ENCODE measurements at regions of chr7 and their contacts with region 1.

Region 1: DNA sequence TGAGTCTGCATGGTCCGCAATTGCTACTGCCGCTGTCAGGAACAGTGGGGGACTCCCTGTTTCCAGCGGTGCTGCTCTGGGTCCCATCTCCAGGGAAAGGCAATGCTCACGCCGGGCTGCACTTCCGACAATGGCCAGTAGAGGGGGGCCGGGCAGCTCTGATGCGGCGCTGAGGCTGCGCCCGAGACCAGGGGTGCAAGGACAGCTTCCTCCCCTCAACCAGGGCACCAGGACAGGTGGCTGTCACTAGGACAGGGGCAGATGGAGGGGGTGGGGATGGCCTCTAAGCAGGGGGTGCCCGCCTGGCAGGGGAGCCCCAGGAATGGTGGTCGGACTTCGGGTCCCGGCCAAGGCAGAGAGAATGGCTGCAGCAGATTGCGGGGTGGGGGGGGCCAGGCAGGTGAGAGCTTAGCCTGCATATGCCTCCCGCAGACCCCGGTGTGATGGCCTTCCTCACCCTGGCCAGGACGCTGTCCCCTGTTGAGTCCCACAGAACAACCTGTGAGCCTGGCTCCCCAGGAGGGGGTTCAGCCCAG is 71.0 kb upstream of the KCTD7 start:
- DNase-seq: peak; percentile 96
- H3K4me3 ChIP-seq: peak overlapping the region in 1 of 2 experiments; percentile 35; a peak in 1 of 4 replicates
- H3K27ac ChIP-seq: no peak overlapping the region
- H3K4me1 ChIP-seq: peaks cover 0 to 9% of the 10 kb centered on the region in 2 experiments; a peak in 1 of 4 replicates
- H3K27me3 ChIP-seq: no peaks in the 10 kb centered on the region
- CTCF ChIP-seq: peak; percentile 98
- EP300 ChIP-seq: no peak
- RAD21 ChIP-seq: peak; percentile 93

Region 2: DNA sequence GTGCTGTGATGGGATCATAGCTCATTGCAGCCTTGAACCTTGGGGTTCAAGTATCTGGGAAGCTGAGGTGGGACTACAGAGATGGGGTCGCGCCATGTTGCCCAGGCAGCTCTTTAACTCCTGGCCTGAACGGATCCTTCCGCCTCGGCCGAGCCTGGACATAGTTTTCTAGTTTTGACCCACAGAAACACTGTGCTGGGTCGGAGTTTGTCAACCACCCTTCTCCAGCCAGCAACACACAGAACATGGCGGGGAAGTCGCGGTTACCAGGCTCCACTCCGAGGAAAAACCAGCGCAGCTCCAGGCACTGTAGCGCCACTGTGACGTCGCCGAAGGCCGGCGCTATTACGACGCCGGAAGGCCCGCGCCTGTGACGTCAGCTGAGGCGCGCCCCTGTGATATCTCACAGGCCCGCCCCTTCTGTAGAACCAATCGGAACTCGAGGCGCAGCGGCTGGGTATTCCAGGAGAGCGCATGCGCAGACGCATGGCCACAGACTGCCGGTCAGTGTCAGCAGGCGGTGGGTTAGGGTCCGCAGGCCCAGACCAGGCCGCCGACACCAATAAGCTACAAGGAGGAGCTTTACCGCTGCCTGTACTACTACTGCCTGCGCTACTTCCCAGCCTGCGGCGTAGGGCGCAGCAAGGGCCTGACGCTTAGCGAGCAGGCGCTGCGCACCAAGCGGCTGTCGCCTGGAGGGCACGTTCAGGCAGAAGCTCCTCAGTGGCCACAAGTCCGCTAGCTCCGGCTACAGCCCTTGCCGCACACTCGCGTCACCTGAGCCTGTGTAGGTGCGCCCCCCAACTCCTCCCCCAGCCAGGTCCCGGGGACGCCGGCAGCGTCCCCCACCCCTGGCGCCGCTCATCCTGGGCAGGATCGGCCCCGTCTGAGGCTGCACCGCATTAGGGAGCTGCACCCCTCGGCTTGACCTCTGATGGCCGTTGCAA is 64.2 kb before region 1 on chr7:
- CTCF ChIA-PET with region 1: no interaction called
- POLR2A ChIA-PET with region 1: no interaction called
- DNase-seq: peak; percentile 99
- H3K4me3 ChIP-seq: peak overlapping the region; percentile 62 to 74
- H3K27ac ChIP-seq: peak overlapping the region; percentile 84
- H3K4me1 ChIP-seq: peaks cover 0 to 8% of the 10 kb centered on the region in 2 experiments; a peak in 1 of 4 replicates
- H3K27me3 ChIP-seq: no peaks in the 10 kb centered on the region
- CTCF ChIP-seq: peak; percentile 22; the same call in 1 of the 2 replicates
- EP300 ChIP-seq: no peak
- RAD21 ChIP-seq: peak; percentile 35; the same call in 1 of the 2 replicates

Region 3: GRCh38 chr7:66542528-66543269 is 15.0 kb before region 1 on chr7:
- CTCF ChIA-PET with region 1: interaction called, 27 read pairs
- POLR2A ChIA-PET with region 1: no interaction called
- DNase-seq: peak; percentile 49
- H3K4me3 ChIP-seq: no peak overlapping the region
- H3K27ac ChIP-seq: peak overlapping the region in 1 of 2 experiments; percentile 26; a peak in 1 of 4 replicates
- H3K4me1 ChIP-seq: no peaks in the 10 kb centered on the region; a peak in 1 of 4 replicates
- H3K27me3 ChIP-seq: no peaks in the 10 kb centered on the region
- CTCF ChIP-seq: no peak
- EP300 ChIP-seq: no peak
- RAD21 ChIP-seq: no peak

Region 4: DNA sequence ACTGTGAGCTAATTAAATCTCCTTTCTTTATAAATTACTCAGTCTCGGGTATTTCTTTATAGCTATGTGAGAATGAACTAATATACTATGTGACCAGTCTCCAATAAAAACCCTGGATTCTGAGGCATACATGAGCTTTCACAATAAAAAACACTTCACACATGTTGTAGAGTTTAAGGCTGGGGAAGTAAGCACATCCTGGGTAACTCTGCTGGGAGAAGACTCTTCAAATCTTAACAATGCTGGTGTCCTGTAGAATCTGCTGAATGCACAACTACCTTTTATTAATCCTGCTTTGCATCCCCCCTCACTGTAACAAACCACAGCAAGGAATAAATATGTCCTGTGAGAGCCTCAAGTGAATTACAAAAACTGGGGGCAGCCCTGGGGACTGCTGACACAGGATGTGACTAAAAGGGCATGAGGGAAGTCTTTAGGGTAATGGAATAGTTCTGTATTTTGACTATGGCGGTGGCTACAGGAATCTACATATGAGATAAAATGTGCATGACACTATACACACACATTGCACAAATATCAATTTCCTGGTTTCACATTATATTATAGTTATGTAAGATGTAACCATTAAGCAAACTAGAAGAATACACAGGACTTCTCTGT is 25.9 kb after region 1 on chr7:
- CTCF ChIA-PET with region 1: interaction called, 14 read pairs
- POLR2A ChIA-PET with region 1: no interaction called
- DNase-seq: no peak
- H3K4me3 ChIP-seq: no peak overlapping the region
- H3K27ac ChIP-seq: no peak overlapping the region
- H3K4me1 ChIP-seq: no peaks in the 10 kb centered on the region
- H3K27me3 ChIP-seq: no peaks in the 10 kb centered on the region
- CTCF ChIP-seq: no peak
- EP300 ChIP-seq: no peak
- RAD21 ChIP-seq: no peak

Region 5: GRCh38 chr7:66642186-66642585 is 84.5 kb after region 1 on chr7:
- CTCF ChIA-PET with region 1: interaction called, 23 read pairs
- POLR2A ChIA-PET with region 1: no interaction called
- DNase-seq: peak; percentile 34
- H3K4me3 ChIP-seq: no peak overlapping the region
- H3K27ac ChIP-seq: no peak overlapping the region; a peak in 1 of 4 replicates
- H3K4me1 ChIP-seq: peaks cover 0 to 2% of the 10 kb centered on the region in 2 experiments; a peak in 1 of 4 replicates
- H3K27me3 ChIP-seq: no peaks in the 10 kb centered on the region
- CTCF ChIP-seq: no peak
- EP300 ChIP-seq: peak in 1 of 2 experiments; percentile 22; a peak in 1 of 4 replicates
- RAD21 ChIP-seq: no peak

Region 6: DNA sequence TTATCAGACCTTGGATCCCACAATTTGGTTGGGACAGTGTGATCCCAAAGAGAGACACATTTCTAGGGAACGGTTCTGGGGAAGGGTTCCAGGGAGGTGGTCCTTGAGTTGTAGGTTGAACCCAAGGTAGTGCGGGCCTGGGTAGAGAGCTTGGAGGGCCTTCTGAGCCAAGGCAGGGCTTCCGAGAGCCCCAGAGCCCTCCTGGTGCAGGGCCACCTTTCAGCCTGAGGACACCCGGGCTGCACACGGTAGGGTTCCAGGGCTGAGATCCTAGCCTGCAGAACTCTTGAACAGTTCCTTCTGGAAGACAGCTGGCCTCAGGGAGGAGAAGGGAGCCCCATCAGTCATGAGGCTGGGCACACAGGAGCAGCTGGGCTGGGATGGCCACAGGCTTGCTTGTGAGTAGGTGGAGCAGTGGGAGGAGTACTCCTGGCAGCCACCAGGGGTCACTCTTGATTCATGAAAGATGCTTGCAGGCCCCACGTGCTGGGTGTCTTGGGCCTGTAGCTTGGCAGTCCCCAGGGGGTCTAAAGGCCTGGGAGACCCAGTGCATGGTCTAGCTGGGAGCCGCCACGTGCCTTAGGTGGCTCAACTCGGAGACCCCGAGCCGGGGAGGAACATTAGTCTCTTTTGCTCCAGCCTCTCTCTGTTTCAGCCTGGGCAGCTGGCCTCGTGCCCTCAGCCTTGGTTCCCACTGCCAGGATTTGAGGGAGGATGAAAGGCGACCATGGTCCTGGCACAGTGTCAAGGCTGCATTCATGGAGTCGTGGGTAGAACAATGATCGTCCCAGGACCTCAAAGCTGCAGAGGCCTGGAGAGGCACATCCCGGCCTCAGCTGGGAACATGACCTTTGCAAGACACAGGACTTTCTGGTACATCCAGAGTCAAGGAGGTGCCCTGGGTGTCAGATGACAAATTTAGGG is 820.5 kb after region 1 on chr7:
- CTCF ChIA-PET with region 1: no interaction called
- POLR2A ChIA-PET with region 1: no interaction called
- DNase-seq: peak; percentile 89
- H3K4me3 ChIP-seq: no peak overlapping the region; a peak in 1 of 4 replicates
- H3K27ac ChIP-seq: no peak overlapping the region
- H3K4me1 ChIP-seq: peaks cover 0 to 3% of the 10 kb centered on the region in 2 experiments; a peak in 1 of 4 replicates
- H3K27me3 ChIP-seq: no peaks in the 10 kb centered on the region
- CTCF ChIP-seq: peak; percentile 91
- EP300 ChIP-seq: no peak
- RAD21 ChIP-seq: peak; percentile 98